WTC11 (cell line): ENCODE measurements at regions of chr15 and their contacts with region 1.

Region 1: DNA sequence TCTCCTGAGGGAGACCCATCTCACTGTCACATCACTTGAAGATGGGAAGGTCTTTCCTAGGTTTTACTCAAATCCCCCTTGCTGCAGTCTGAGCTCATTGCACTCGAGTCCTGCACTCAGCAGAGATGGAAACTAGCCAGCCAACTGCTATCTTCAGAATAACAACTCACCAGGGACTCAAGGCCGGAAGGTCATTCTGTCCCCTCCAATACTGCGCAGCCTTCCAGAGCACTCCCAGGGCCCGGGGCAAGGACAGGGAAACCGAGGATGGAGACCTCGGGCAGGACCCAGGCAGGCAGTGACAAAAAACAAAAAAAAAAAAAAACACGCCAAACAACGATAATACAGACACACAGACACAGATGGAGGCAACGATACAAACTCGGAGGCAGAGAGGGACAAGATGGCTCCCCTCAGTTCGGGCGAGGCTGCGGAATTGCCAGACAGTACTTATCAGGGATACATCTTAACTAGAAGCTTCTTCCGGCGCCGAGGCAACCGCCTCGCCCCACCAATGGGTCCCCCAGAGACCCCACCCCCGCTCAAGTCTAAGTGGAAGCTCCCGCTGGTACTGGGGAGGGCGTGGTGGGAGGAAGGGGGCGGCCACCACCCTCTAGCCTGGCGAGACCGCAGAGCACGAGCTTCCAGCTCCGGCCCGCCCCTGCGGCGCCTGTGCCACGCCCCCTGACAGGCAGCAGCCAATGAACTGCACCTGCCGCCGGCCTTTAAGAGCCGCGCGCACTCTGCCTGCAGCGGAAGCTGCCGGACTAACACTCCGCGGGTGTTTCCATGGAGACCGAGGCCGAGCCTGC is 7.0 kb upstream of the MAP1A start:
- DNase-seq: peak; percentile 99
- ATAC-seq: peak; percentile 91
- H3K4me3 Mint-ChIP-seq: peak overlapping the region; percentile 88
- H3K27ac Mint-ChIP-seq: peak overlapping the region; percentile 99
- H3K4me1 Mint-ChIP-seq: peaks cover 28% of the 10 kb centered on the region
- H3K27me3 Mint-ChIP-seq: peaks cover 32% of the 10 kb centered on the region
- CTCF ChIP-seq: no peak

Region 2: GRCh38 chr15:43329960-43330779 is 180.2 kb before region 1 on chr15 and contains the start of gene LCMT2:
- CTCF ChIA-PET with region 1: no interaction called
- POLR2A ChIA-PET with region 1: no interaction called
- DNase-seq: peak; percentile 87
- ATAC-seq: peak; percentile 95
- H3K4me3 Mint-ChIP-seq: peak within 1 kb of the TSS; percentile 90
- H3K27ac Mint-ChIP-seq: peak within 1 kb of the TSS; percentile 91
- H3K4me1 Mint-ChIP-seq: peaks cover 20% of the 10 kb centered on the region
- H3K27me3 Mint-ChIP-seq: peaks cover 5% of the 10 kb centered on the region
- CTCF ChIP-seq: no peak
- total RNA-seq, gene LCMT2: 7.6 to 10.6 TPM (median 9.6 TPM) in 3 replicates

Region 3: GRCh38 chr15:43370975-43371974 is 139.1 kb before region 1 on chr15 and contains the starts of genes TUBGCP4 and ZSCAN29:
- CTCF ChIA-PET with region 1: interaction called, 17 read pairs
- POLR2A ChIA-PET with region 1: interaction called, 8 read pairs
- DNase-seq: peak; percentile 92
- ATAC-seq: peak; percentile 90
- H3K4me3 Mint-ChIP-seq: peak within 1 kb of the TSS; percentile 92
- H3K27ac Mint-ChIP-seq: peak within 1 kb of the TSS; percentile 83
- H3K4me1 Mint-ChIP-seq: peaks cover 33% of the 10 kb centered on the region
- H3K27me3 Mint-ChIP-seq: no peaks in the 10 kb centered on the region
- CTCF ChIP-seq: no peak
- total RNA-seq, gene TUBGCP4: 22.5 to 28.5 TPM (median 25.4 TPM) in 3 replicates
- total RNA-seq, gene ZSCAN29: 39.7 to 41.7 TPM (median 41.6 TPM) in 3 replicates

Region 4: GRCh38 chr15:43440721-43441281 is 69.6 kb before region 1 on chr15:
- CTCF ChIA-PET with region 1: interaction called, 15 read pairs
- POLR2A ChIA-PET with region 1: no interaction called
- DNase-seq: no peak
- ATAC-seq: peak; percentile 38; the same call in 1 of the 2 replicates
- H3K4me3 Mint-ChIP-seq: no peak overlapping the region
- H3K27ac Mint-ChIP-seq: no peak overlapping the region; the same call in 1 of the 2 replicates
- H3K4me1 Mint-ChIP-seq: peaks cover 7% of the 10 kb centered on the region
- H3K27me3 Mint-ChIP-seq: no peaks in the 10 kb centered on the region
- CTCF ChIP-seq: no peak

Region 5: DNA sequence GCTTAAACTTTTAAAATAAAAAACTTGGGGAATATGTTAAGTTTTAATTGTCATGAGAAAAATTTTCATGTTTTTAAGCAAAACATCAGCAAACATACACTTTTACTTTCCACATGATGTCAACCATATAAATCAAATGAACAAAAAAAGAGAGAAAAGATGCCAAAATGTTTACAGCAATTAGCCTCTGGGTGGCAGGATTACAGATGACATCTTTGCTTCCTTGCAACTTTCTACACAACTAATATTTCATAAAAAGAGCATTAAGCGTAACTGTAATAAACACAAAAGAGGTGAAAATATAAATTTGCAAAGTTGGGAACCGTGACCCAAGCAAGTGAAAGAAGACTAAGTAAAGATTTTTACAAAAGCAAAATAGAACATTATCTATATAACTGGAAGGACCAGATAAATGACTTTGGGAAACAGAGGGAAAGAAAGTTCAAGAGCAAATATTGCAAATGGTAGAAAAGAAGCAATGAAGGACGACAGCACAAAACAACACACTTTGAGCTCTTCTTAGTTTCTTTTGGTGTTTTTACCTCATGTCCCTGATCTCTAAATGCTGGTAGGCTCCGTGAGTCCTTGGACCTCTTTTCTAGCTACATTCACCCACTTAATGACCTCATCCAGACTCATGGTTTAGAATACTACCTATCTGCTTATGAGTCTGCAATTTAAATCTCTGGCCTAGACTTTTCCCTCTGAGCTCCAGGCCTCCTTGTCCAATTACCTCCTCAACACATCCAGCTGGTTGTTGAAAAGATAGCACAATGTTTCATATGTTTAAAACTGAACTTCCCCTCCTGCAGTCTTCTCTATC is 26.9 kb before region 1 on chr15:
- CTCF ChIA-PET with region 1: interaction called, 12 read pairs
- POLR2A ChIA-PET with region 1: no interaction called
- DNase-seq: no peak
- ATAC-seq: no peak
- H3K4me3 Mint-ChIP-seq: no peak overlapping the region
- H3K27ac Mint-ChIP-seq: peak overlapping the region; percentile 24; the same call in 1 of the 2 replicates
- H3K4me1 Mint-ChIP-seq: peaks cover 4% of the 10 kb centered on the region
- H3K27me3 Mint-ChIP-seq: no peaks in the 10 kb centered on the region
- CTCF ChIP-seq: no peak

Region 6: GRCh38 chr15:43492673-43493601 is 17.5 kb before region 1 on chr15 and contains the start of gene TP53BP1:
- CTCF ChIA-PET with region 1: interaction called, 80 read pairs
- POLR2A ChIA-PET with region 1: interaction called, 19 read pairs
- DNase-seq: peak; percentile 97
- ATAC-seq: peak; percentile 97
- H3K4me3 Mint-ChIP-seq: peak within 1 kb of the TSS; percentile 95
- H3K27ac Mint-ChIP-seq: peak within 1 kb of the TSS; percentile 100
- H3K4me1 Mint-ChIP-seq: peaks cover 32% of the 10 kb centered on the region
- H3K27me3 Mint-ChIP-seq: no peaks in the 10 kb centered on the region
- CTCF ChIP-seq: no peak
- total RNA-seq, gene TP53BP1: 52.8 to 67.1 TPM (median 54.9 TPM) in 3 replicates

Region 7: DNA sequence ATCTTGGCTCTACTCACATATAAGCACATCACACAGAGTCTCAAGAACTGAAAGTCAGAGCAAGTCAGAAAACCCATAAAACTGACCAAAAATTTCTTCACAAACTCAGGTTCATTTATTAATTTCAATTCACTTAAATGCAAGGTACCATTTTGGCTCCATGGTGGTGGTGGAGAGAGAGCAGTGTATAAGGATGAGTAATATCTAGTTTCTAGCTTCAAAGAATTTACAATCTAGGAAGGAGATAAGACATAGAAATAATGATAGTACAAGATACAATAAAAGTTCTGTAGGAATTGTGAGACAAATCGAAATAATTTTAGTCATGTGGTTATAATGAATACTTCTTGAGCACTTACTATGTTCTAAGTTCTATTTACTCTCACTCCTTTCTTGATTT is 10.8 kb before region 1 on chr15:
- CTCF ChIA-PET with region 1: interaction called, 80 read pairs
- POLR2A ChIA-PET with region 1: interaction called, 6 read pairs
- DNase-seq: no peak
- ATAC-seq: no peak
- H3K4me3 Mint-ChIP-seq: no peak overlapping the region
- H3K27ac Mint-ChIP-seq: no peak overlapping the region
- H3K4me1 Mint-ChIP-seq: no peaks in the 10 kb centered on the region
- H3K27me3 Mint-ChIP-seq: no peaks in the 10 kb centered on the region; the same call in 1 of the 2 replicates
- CTCF ChIP-seq: no peak

Region 8: DNA sequence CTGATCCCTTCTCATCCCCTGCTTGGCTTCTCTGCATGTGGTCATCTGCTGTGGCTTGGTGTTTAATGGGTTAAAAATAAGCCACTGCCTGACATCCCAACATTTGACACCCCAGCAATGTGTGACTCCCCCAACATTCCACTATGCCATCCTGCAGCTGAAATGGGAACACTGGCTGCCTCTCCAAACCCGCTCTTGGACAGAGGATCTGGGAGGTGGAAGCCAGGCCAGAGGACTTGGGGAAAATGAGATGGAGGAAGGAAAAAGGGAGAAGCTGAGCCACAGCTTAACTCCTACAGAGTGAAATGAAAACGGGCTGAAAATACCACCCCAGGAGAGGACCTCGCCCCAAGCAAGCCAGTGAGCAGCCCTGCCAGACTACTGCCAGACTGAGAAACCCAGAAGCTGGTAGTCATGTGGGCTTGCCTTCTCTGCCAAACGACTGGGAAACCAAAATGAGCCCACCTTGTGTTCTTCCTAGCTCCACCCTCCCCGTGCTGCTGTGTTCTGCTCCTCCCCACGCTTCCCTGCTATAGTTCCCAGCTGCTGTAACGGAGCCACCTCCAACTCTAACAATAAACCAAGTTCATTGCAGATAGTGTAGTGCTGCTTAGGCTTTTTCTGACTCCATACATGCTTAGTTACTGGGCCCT is 20.7 kb after region 1 on chr15:
- CTCF ChIA-PET with region 1: interaction called, 11 read pairs
- POLR2A ChIA-PET with region 1: interaction called, 3 read pairs
- DNase-seq: no peak
- ATAC-seq: peak; percentile 72
- H3K4me3 Mint-ChIP-seq: no peak overlapping the region
- H3K27ac Mint-ChIP-seq: no peak overlapping the region
- H3K4me1 Mint-ChIP-seq: peaks cover 21% of the 10 kb centered on the region
- H3K27me3 Mint-ChIP-seq: no peaks in the 10 kb centered on the region; the same call in 1 of the 2 replicates
- CTCF ChIP-seq: no peak

Region 9: DNA sequence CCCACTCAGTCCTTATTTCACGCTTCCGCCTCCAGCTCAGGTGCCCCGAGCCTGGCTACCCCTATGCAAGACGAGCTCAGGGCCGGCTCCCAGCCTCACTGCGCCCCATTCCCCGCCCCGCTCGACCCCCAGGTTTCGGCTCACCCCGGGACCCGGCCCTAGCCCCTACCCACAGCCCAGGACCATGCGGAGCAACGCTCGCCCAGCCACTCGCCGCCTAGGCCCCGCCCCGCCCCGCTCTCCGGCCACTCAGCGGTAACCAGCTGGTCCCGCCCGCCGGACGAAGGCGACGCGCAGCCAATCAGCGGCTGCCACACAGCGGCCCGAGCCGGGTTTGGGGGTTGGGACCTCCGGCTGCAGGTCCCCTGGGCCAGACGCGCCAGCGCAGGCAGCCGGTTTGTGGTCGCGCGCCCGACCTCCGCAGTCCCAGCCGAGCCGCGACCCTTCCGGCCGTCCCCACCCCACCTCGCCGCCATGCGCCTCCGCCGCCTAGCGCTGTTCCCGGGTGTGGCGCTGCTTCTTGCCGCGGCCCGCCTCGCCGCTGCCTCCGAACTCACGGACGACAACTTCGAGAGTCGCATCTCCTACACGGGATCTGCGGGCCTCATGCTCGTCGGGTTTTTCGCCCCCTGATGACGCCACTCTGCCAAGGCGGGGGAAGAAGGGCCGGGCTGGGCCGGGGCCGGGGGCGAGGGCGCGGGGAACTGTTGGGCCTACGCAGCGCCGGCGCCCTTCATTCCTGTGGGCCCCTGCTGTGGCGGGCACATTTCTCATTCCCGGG is 138.4 kb after region 1 on chr15 and contains the start of gene CATSPER2:
- CTCF ChIA-PET with region 1: no interaction called
- POLR2A ChIA-PET with region 1: no interaction called
- DNase-seq: peak; percentile 15
- ATAC-seq: peak; percentile 64
- H3K4me3 Mint-ChIP-seq: no peak within 1 kb of the TSS
- H3K27ac Mint-ChIP-seq: no peak within 1 kb of the TSS
- H3K4me1 Mint-ChIP-seq: no peaks in the 10 kb centered on the region
- H3K27me3 Mint-ChIP-seq: no peaks in the 10 kb centered on the region; the same call in 1 of the 2 replicates
- CTCF ChIP-seq: no peak
- total RNA-seq, gene CATSPER2: 2.5 to 3.2 TPM (median 2.5 TPM) in 3 replicates